ENCODE measurements at regions of chr20 and their contacts with region 1.

Region 1: GRCh38 chr20:31560094-31560899 is 44.8 kb upstream of the ID1 start:
- DNase-seq: peak; percentile 91
- ATAC-seq: peak; percentile 78
- H3K4me3 Mint-ChIP-seq: no peak overlapping the region
- H3K27ac Mint-ChIP-seq: peak overlapping the region; percentile 85
- H3K4me1 Mint-ChIP-seq: peaks cover 16% of the 10 kb centered on the region
- H3K27me3 Mint-ChIP-seq: no peaks in the 10 kb centered on the region

Region 2: GRCh38 chr20:31494131-31494530 is 66.2 kb before region 1 on chr20:
- CTCF ChIA-PET with region 1: no interaction called
- POLR2A ChIA-PET with region 1: no interaction called
- intact Hi-C with region 1: no loop called
- DNase-seq: no peak
- ATAC-seq: no peak
- H3K4me3 Mint-ChIP-seq: no peak overlapping the region
- H3K27ac Mint-ChIP-seq: no peak overlapping the region
- H3K4me1 Mint-ChIP-seq: no peaks in the 10 kb centered on the region
- H3K27me3 Mint-ChIP-seq: peaks cover 8% of the 10 kb centered on the region

Region 3: GRCh38 chr20:31547017-31547675 is 13.2 kb before region 1 on chr20:
- CTCF ChIA-PET with region 1: interaction called, 29 read pairs
- POLR2A ChIA-PET with region 1: no interaction called
- intact Hi-C with region 1: no loop called
- DNase-seq: peak; percentile 90
- ATAC-seq: peak; percentile 70
- H3K4me3 Mint-ChIP-seq: peak overlapping the region; percentile 89
- H3K27ac Mint-ChIP-seq: peak overlapping the region; percentile 96
- H3K4me1 Mint-ChIP-seq: peaks cover 28% of the 10 kb centered on the region
- H3K27me3 Mint-ChIP-seq: no peaks in the 10 kb centered on the region

Region 4: DNA sequence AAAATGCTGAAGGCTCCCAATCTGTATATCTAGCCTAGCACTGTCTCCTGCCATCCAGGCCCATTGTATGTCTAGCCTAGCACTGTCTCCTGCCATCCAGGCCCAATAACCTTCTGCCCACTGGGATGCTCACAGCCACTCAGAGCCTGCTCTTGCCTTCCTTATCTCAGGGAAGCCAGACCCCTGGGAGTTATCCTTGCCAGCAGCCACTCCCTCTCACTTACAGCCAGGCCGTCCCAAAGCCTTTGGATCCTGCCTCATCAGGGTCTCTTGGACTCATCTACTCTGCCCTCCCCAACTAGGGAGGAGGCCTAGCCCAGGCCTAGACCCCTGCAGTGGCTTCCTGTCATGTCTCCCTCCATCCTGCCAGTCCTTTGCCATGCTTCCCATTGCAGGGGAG is 754.5 kb after region 1 on chr20:
- CTCF ChIA-PET with region 1: no interaction called
- POLR2A ChIA-PET with region 1: no interaction called
- intact Hi-C with region 1: no loop called
- DNase-seq: no peak
- ATAC-seq: no peak
- H3K4me3 Mint-ChIP-seq: no peak overlapping the region
- H3K27ac Mint-ChIP-seq: peak overlapping the region; percentile 56
- H3K4me1 Mint-ChIP-seq: peaks cover 28% of the 10 kb centered on the region
- H3K27me3 Mint-ChIP-seq: no peaks in the 10 kb centered on the region

Measured in activated CD4-positive, alpha-beta T cell treated with anti-CD3 and anti-CD28 coated beads for 36 hours (primary cell).